SK-N-SH (cell line): ENCODE measurements at regions of chr11 and their contacts with region 1.

Region 1: GRCh38 chr11:95150946-95151684 is 61.5 kb downstream of the ENDOD1 start:
- DNase-seq: peak; percentile 78
- H3K4me3 ChIP-seq: no peak overlapping the region; a peak in 1 of 4 replicates
- H3K27ac ChIP-seq: no peak overlapping the region
- H3K4me1 ChIP-seq: peaks cover 24 to 27% of the 10 kb centered on the region in 2 experiments
- H3K27me3 ChIP-seq: no peaks in the 10 kb centered on the region
- CTCF ChIP-seq: peak; percentile 58
- EP300 ChIP-seq: no peak
- RAD21 ChIP-seq: no peak

Region 2: DNA sequence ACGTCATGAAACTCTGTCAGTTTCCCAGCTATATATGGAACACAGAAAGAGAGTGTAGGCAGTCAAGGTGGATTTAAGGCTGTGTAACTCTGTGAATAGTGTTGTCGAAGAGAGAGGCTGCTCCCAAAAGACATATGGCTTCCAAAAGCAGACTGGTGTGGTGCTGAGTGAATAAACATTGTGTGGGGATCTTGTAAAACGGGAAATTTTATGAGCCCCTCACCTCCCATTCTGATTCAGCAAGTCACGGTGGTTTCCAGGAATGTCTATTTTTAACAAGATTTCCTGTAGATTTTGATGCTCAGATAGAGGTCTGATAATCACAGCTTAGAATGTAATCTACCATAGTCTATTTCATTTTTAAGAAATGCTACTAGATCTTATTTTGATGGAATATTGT is 12.0 kb after region 1 on chr11:
- CTCF ChIA-PET with region 1: interaction called, 25 read pairs
- POLR2A ChIA-PET with region 1: no interaction called
- DNase-seq: no peak
- H3K4me3 ChIP-seq: no peak overlapping the region
- H3K27ac ChIP-seq: no peak overlapping the region
- H3K4me1 ChIP-seq: no peaks in the 10 kb centered on the region
- H3K27me3 ChIP-seq: no peaks in the 10 kb centered on the region
- CTCF ChIP-seq: no peak
- EP300 ChIP-seq: no peak
- RAD21 ChIP-seq: no peak